GM10248 (cell line): ENCODE measurements at regions of chr16 and their contacts with region 1.

Region 1: DNA sequence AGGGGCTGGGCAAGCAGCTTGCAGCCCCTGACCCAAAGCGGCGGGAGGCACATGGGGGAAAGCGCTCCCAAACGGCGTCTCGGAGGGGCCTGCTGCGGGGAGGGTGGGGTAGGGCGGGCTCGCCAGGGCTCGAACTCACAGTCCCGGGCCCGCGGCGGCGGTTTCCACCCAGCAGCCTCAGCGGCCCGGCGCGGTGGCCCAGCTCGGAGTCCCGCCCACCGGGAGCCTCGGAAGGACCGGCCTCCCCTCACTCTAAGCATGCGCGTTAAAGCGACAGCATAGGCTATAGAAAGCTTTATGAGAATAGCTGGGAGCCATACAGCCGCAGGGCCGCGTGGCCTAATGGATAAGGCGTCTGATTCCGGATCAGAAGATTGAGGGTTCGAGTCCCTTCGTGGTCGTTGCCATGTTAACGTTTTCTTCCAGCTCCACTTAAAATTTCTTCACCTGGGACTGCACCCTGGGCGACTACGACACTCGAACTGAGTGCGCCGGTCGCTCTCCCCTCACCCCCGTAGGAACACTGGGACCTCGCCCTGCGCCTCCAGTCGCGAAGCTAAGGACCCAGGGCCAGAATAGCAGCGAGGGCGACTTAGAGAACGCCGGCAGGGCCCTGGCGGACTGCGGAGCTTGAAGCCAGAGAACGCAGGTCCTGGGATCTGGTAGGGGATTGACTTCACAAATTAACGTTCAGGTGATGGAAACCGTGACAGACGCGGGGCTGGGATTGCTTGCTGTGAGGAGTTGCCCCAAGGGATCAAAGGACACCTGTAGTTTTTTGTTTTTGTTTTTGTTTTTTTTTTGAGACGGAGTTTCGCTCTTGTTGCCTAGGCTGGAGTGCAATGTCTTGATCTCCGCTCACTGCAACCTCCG is 15.8 kb downstream of the ZNF213 start:
- DNase-seq: peak; percentile 97
- CTCF ChIP-seq: no peak

Region 2: DNA sequence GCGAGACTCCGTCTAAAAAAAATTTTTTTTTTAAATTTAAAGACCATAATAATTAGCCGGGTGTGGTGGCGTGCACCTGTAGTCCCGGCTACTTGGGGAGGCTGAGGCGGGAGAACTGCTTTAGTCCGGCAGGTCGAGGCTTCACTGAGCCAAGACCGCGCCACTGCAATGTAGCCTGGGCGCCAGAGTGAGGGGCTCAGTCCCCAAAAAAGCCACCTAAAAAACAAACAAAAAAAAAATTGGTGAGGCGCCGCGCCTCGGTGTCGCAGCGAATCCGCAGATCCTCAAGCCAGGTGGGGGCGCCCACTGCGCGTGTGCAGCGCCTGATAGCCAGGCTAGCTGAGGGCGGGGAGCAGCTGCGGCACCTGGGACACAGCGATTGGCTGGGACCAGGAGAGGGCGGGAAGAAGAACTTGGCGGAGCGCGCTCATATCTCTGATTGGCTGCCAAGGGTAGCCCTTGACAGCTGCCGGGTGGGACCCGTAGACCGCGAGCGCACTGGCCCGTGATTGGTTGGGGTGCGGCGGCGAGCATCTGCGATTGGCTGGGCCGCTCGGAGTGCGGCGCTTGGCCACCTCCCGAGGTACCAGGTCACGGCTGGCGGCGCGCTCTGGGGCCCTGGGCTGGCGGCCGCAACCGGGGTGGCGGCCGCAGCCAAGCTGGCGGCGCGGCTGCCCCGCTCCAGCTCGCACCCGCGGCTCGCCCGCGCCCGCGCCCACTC is 146.8 kb before region 1 on chr16:
- CTCF ChIA-PET with region 1: no interaction called
- POLR2A ChIA-PET with region 1: no interaction called
- DNase-seq: peak; percentile 99
- CTCF ChIP-seq: peak; percentile 73

Region 3: GRCh38 chr16:3045357-3045728 is 105.2 kb before region 1 on chr16:
- CTCF ChIA-PET with region 1: interaction called, 11 read pairs
- POLR2A ChIA-PET with region 1: interaction called, 3 read pairs
- DNase-seq: no peak
- CTCF ChIP-seq: no peak

Region 4: DNA sequence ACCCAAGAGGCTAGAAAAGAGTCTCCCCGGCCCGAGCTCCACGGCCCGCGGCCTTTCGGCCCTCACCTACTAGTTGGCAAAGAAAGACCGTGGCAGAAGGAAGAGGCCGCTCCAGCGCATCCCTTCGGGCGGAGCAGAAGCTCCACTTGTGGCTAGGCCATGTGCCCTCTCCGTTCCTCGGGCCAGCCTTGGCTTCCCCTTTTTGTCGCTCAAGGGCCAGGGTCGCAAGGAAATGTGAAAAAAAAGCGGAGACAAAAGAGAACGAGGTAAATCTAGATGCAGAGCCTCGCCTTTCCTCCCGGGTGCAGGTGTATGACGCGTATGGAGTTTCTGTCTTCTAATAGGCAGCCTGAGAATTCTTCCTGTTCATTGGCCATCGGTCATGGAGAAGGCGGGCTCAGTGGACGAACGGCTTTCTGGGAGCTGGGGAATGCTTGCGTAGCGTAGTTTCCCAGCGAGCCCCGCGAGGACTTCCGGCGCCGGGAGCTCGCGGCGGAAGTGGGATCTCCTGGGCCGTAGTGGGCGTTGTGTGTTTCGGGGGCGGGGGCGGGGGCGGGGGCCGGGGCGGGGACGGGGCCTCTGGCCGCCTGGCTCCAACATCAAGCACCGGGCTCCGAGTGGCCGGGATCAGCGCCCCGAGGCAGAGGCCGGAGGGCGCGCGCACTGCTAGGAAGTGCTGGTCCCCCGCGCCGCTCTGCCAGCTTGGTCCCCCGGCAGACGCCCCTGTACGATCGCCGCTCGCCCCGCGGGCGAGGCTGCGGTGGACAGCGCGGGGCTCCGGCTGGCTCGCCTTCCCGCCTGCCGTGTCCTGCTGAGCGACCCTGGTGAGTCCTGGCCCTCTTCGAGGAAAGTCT is 15.8 kb before region 1 on chr16 and contains the start of gene ZNF213:
- CTCF ChIA-PET with region 1: interaction called, 189 read pairs
- POLR2A ChIA-PET with region 1: interaction called, 3 read pairs
- DNase-seq: peak; percentile 94
- CTCF ChIP-seq: no peak

Region 5: DNA sequence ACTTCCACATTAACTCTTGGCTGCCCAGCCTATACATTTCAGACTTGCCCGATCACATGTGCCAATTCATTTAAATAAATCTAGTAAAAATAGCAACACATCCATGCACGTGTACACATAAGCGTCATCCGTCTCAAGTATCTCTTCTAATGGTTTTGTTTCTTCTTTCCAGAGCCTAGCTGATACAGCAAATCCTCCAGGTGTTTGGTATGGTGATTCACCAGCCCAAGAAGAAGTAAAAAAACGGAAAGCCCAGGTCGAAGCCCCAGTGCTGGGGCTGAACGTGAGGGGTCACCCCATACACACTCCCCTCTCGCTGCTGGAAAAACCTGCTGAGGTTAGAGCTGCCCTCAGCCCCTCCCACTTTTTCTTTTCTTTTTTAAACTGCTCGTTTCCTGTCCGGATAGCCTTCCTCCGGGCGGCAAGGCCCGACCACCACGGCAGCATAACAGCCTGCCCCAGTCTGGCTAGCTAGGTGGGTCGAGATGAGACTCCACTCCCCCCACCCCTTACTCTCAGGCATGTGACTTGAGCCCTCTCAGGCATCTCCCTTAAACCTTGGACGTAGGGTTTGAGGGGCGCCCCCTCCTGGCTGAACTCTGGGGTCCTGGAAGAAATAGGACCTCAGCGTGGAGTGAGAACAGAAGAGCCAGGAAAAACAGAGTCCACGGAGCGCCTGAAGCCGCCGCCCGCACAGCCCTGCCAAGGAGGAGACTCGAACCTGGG is 23.5 kb after region 1 on chr16:
- CTCF ChIA-PET with region 1: interaction called, 20 read pairs
- POLR2A ChIA-PET with region 1: no interaction called
- DNase-seq: peak; percentile 59
- CTCF ChIP-seq: peak; percentile 38